Psoas muscle (tissue), 8 donors: ENCODE measurements at regions of chr5 and their contacts with region 1.

Region 1: GRCh38 chr5:62315376-62316175 is 9.6 kb downstream of the KIF2A start:
- DNase-seq: no peak
- ATAC-seq: no peak
- H3K4me3 ChIP-seq: no peak overlapping the region
- H3K27ac ChIP-seq: no peak overlapping the region
- H3K4me1 ChIP-seq: no peaks in the 10 kb centered on the region
- H3K27me3 ChIP-seq: no peaks in the 10 kb centered on the region
- CTCF ChIP-seq: no peak

Region 2: DNA sequence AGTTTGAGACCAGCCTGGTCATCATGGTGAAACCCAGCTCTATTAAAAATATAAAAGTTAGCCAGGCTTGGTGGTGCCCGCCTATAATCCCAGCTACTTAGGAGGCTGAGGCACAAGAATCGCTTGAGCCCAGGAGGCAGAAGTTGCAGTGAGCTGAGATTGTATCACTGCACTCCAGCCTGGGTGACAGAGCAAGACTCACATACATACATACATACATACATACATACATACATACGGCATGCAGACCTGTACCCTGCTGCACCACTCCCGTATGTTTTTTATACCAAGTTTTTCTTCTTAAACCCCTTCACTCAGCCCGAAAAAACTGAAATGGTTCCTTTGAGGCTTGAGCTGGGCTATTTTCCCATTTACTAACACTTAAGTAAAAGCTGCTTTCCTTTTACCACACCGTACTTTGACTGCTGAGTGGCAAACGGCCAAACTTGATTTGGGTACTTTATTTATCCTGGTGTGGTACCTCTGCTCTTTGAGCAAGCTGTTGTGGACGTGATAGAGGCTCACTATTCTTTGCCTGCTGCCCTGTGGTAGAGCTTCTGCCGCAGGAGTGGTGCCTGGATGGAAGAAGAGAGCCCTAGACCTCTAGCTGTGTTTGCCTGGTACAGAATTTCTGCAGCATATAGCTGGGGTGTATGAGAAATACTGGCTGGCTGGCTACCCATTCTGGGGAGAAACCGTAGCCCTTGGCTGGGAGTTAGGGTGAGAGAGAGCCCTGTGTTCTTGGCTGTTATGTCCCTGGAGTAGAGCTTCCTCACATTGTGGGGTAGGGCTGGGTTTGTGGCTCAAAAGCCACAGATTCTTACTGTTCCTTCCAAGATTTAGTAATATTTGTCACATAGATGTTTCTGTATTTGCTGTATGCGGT is 116.4 kb after region 1 on chr5:
- intact Hi-C with region 1: no loop called
- DNase-seq: no peak
- ATAC-seq: peak in 3 of 4 donors; percentile 46 to 87 (median 73)
- H3K4me3 ChIP-seq: no peak overlapping the region
- H3K27ac ChIP-seq: peak overlapping the region; percentile 11
- H3K4me1 ChIP-seq: peaks cover 16% of the 10 kb centered on the region
- H3K27me3 ChIP-seq: no peaks in the 10 kb centered on the region
- CTCF ChIP-seq: no peak

Region 3: DNA sequence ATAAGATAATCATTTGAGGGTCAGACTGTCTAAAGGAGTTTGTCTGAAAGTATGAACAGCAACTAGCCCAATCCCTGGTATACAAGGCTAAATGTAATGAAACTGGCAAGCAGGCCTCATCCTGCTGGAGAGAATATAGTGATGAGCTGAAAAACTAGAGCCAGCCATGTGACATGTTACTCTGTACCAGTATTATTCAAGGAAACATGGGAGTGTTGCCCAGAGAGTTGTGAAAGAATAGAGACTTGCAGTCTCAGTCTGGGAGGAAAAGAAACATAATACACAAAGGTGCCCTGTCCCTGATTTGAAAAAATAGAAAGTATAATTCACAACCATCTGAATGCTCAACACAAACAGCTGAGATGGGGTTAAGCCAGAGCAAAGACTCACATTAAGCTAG is 1684.5 kb after region 1 on chr5:
- intact Hi-C with region 1: loop called in 1 of 2 experiments (anchors 10 kb)
- DNase-seq: no peak
- ATAC-seq: peak; percentile 84 to 99 (median 86)
- H3K4me3 ChIP-seq: no peak overlapping the region
- H3K27ac ChIP-seq: no peak overlapping the region
- H3K4me1 ChIP-seq: peaks cover 3% of the 10 kb centered on the region
- H3K27me3 ChIP-seq: no peaks in the 10 kb centered on the region
- CTCF ChIP-seq: no peak